Activated CD4-positive, alpha-beta memory T cell treated with anti-CD3 and anti-CD28 coated beads for 36 hours (primary cell): ENCODE measurements at regions of chr7 and their contacts with region 1.

Region 1: DNA sequence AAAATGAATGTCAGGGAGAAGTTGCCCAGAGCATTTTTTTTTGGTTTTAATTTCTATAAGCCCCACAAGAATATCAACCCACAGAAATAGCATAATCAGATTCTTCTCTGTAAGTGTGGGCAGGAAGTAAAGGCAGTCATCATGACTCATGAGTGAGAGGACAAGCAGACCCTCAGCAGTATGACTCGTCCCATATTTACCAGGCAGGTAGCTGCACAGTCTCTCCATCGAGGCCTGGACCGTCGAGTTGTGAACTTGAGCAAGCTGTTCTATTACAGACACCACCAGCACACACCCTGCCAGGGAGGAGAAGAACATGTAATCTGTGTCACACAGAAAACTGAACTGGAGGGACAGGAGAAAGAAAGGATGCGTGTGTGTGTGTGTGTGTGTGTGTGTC is 37.8 kb downstream of the AOAH start:
- DNase-seq: peak; percentile 66
- H3K4me3 Mint-ChIP-seq: no peak overlapping the region
- H3K27ac Mint-ChIP-seq: peak overlapping the region; percentile 60
- H3K4me1 Mint-ChIP-seq: peaks cover 63% of the 10 kb centered on the region
- H3K27me3 Mint-ChIP-seq: no peaks in the 10 kb centered on the region

Region 2: DNA sequence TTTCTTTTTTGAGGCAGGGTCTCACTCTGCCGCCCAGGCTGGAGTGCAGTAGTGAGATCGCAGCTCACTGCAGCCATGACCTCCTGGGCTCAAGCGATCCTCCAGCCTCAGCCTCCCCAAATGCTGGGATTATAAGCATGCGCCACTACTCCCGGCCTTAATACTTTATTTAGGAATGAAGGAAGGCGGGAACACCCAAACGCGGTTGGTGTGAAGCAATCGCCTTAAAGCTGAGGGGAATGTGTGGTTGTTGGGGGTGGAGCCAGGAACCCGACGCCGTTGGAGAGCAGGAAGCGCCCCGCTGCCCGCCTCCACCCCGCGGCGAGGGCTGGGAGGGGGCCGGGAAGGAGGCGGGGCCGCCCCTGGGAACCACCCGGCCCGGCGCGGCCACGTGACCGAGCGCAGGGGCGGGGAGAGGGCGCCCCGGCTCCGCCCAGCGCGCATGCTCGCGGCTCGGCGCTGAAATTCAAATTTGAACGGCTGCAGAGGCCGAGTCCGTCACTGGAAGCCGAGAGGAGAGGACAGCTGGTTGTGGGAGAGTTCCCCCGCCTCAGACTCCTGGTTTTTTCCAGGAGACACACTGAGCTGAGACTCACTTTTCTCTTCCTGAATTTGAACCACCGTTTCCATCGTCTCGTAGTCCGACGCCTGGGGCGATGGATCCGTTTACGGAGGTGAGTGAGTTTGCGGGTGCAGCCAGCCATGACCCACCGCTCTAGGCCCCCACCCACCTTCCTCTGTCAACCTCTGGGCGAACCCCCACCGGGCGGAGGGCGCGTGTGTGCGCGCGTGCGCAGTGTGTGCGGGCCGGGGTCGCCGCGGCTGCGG is 296.9 kb before region 1 on chr7 and contains the start of gene ANLN:
- CTCF ChIA-PET with region 1: no interaction called
- POLR2A ChIA-PET with region 1: no interaction called
- intact Hi-C with region 1: loop called (anchors 10 kb)
- DNase-seq: peak; percentile 91
- H3K4me3 Mint-ChIP-seq: peak within 1 kb of the TSS; percentile 93
- H3K27ac Mint-ChIP-seq: peak within 1 kb of the TSS; percentile 88
- H3K4me1 Mint-ChIP-seq: peaks cover 24% of the 10 kb centered on the region
- H3K27me3 Mint-ChIP-seq: no peaks in the 10 kb centered on the region
- total RNA-seq, gene ANLN: 46.6 to 54.7 TPM

Region 3: GRCh38 chr7:36707465-36707864 is 21.0 kb after region 1 on chr7:
- CTCF ChIA-PET with region 1: interaction called, 3 read pairs
- POLR2A ChIA-PET with region 1: no interaction called
- intact Hi-C with region 1: loop called (anchors 1 kb)
- DNase-seq: no peak
- H3K4me3 Mint-ChIP-seq: no peak overlapping the region
- H3K27ac Mint-ChIP-seq: peak overlapping the region; percentile 69
- H3K4me1 Mint-ChIP-seq: peaks cover 27% of the 10 kb centered on the region
- H3K27me3 Mint-ChIP-seq: peaks cover 3% of the 10 kb centered on the region

Region 4: DNA sequence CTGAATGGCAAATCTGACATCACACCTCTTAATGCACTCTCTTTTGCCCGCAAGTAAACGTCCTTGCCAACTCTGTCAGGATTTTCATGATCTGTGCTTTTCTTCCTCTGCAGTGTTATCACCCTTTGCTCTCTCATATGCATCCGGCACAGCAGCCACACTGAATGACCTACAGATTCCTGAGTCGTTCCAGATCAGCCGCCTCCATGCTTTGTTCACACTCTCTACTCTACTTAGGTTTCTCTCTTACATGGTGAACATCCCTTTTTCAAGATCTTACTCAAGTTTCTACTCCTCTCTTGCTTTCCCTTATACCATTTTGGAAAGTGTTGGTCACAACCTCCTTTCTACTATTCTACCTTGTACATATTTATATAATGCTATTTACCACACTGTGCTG is 165.5 kb after region 1 on chr7:
- CTCF ChIA-PET with region 1: no interaction called
- POLR2A ChIA-PET with region 1: no interaction called
- intact Hi-C with region 1: loop called (anchors 5 kb)
- DNase-seq: peak; percentile 40
- H3K4me3 Mint-ChIP-seq: no peak overlapping the region
- H3K27ac Mint-ChIP-seq: no peak overlapping the region
- H3K4me1 Mint-ChIP-seq: peaks cover 17% of the 10 kb centered on the region
- H3K27me3 Mint-ChIP-seq: no peaks in the 10 kb centered on the region